ENCODE measurements at regions of chr6 and their contacts with region 1.

Region 1: GRCh38 chr6:168884646-168885086 is 369.0 kb downstream of the THBS2 start:
- DNase-seq: peak; percentile 35 to 68
- H3K4me3 ChIP-seq: peak overlapping the region; percentile 13 to 57 (median 19)
- H3K27ac ChIP-seq: no peak overlapping the region
- H3K4me1 ChIP-seq: no peaks in the 10 kb centered on the region
- H3K27me3 ChIP-seq: no peaks in the 10 kb centered on the region
- CTCF ChIP-seq: peak; percentile 66 to 95 (median 91)
- POLR2A ChIP-seq: no peak

Region 2: GRCh38 chr6:167485186-167485978 is 1399.3 kb before region 1 on chr6:
- intact Hi-C with region 1: no loop called
- DNase-seq: no peak
- H3K4me3 ChIP-seq: no peak overlapping the region
- H3K27ac ChIP-seq: no peak overlapping the region
- H3K4me1 ChIP-seq: no peaks in the 10 kb centered on the region
- H3K27me3 ChIP-seq: no peaks in the 10 kb centered on the region
- CTCF ChIP-seq: peak in 2 of 3 donors; percentile 39 to 47
- POLR2A ChIP-seq: no peak

Region 3: GRCh38 chr6:168368066-168368820 is 516.4 kb before region 1 on chr6:
- intact Hi-C with region 1: loop called (anchors 2 kb)
- DNase-seq: no peak
- H3K4me3 ChIP-seq: no peak overlapping the region
- H3K27ac ChIP-seq: peak overlapping the region; percentile 20 to 48
- H3K4me1 ChIP-seq: no peaks in the 10 kb centered on the region
- H3K27me3 ChIP-seq: no peaks in the 10 kb centered on the region
- CTCF ChIP-seq: no peak
- POLR2A ChIP-seq: no peak